Breast epithelium (tissue), 4 donors: ENCODE measurements at regions of chr19 and their contacts with region 1.

Region 1: GRCh38 chr19:15971222-15971780 is 22.5 kb downstream of the OR10H4 start:
- DNase-seq: no peak
- H3K4me3 ChIP-seq: no peak overlapping the region
- H3K27ac ChIP-seq: no peak overlapping the region
- H3K4me1 ChIP-seq: no peaks in the 10 kb centered on the region
- H3K27me3 ChIP-seq: peaks cover 0 to 5% of the 10 kb centered on the region in 2 donors
- CTCF ChIP-seq: no peak
- POLR2A ChIP-seq: no peak

Region 2: GRCh38 chr19:15831626-15832025 is 139.7 kb before region 1 on chr19:
- intact Hi-C with region 1: loop called (anchors 5 kb)
- DNase-seq: no peak
- H3K4me3 ChIP-seq: no peak overlapping the region
- H3K27ac ChIP-seq: no peak overlapping the region
- H3K4me1 ChIP-seq: no peaks in the 10 kb centered on the region
- H3K27me3 ChIP-seq: no peaks in the 10 kb centered on the region
- CTCF ChIP-seq: no peak
- POLR2A ChIP-seq: no peak

Region 3: DNA sequence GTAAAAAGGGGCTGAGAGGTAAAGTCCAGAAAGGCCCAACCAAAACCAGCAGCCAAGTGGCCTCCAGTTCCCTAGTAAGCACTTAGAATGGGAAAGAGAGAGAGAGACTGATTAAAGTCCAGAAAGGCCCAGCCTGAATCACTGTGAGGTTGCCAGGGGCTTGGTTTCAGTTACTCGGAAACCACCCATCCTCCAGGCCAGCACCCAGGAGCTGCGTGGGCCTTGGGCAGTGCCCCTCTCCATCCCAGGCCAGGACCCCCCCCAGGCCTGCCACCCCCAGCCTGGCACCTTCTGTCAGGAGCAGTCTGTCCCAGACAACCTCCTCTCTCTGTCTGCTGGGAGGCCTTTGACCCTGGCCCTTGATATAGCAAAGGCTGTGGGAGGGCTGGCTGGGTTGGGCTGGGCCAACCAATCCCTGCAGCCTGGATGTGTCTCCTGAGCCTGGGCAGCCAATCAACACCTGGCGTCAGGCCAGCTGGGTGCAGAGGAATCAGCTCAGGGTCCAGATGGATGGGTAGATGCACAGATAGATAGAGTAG is 73.5 kb before region 1 on chr19 and contains the start of gene CYP4F2:
- intact Hi-C with region 1: loop called (anchors 2 kb)
- DNase-seq: no peak
- H3K4me3 ChIP-seq: no peak within 1 kb of the TSS
- H3K27ac ChIP-seq: no peak within 1 kb of the TSS
- H3K4me1 ChIP-seq: no peaks in the 10 kb centered on the region
- H3K27me3 ChIP-seq: peaks cover 0 to 12% of the 10 kb centered on the region in 2 donors
- CTCF ChIP-seq: no peak
- POLR2A ChIP-seq: no peak
- total RNA-seq, gene CYP4F2: under 0.01 TPM in 1 of 3 donors, not detected in the others